Heart right ventricle (tissue), 16 donors: ENCODE measurements at regions of chr10 and their contacts with region 1.

Region 1: DNA sequence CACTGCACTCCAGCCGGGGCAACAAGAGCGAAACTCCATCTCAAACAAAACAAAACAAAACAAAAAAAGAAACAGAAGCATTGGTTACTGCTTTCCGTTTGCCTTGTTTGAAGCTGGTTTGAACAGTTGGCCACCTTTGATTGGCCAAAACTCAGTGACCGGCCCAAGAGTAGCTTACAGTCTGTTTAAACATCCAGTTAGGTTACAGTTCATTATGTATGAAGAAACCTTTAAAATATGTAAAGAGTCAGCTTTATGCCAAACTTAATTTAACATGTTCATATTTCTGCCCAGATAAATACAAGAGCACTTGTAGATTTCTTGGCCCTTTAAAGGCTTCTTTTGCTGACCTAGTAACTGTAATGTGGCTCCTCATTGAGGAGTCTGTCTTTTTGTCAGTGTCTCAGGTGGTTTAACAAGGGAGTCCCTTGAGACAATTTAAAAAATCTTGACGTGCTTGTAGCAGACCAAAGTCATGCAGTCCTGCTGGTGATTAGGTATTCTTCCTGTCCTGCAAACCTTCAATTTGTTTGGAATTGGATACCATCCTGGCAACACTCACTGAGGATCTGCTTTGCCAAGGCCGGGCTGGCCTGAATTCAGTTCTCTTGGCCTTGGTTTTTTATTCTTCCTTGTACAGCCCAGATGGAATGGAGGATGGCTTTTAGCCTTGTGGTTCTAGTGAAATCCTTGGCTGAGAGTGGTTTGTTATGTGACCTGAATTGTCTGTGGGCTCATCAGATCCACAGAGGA is 128.9 kb downstream of the PLXDC2 start:
- DNase-seq: peak; percentile 49 to 50
- ATAC-seq: peak; percentile 43 to 89 (median 66)
- H3K4me3 ChIP-seq: no peak overlapping the region
- H3K27ac ChIP-seq: peak overlapping the region in 9 of 10 donors; percentile 1 to 72 (median 47)
- H3K4me1 ChIP-seq: peaks cover 20 to 70% (median 45%) of the 10 kb centered on the region in 9 donors
- H3K27me3 ChIP-seq: no peaks in the 10 kb centered on the region
- CTCF ChIP-seq: no peak

Region 2: GRCh38 chr10:19828278-19829049 is 116.6 kb before region 1 on chr10:
- intact Hi-C with region 1: loop called in 2 of 10 experiments (anchors 5 to 10 kb)
- DNase-seq: peak in 1 of 2 donors; percentile 22
- ATAC-seq: peak; percentile 61 to 76 (median 68)
- H3K4me3 ChIP-seq: no peak overlapping the region
- H3K27ac ChIP-seq: peak overlapping the region in 8 of 10 donors; percentile 1 to 72 (median 48)
- H3K4me1 ChIP-seq: peaks cover 9 to 92% (median 80%) of the 10 kb centered on the region in 9 donors
- H3K27me3 ChIP-seq: no peaks in the 10 kb centered on the region
- CTCF ChIP-seq: no peak

Region 3: DNA sequence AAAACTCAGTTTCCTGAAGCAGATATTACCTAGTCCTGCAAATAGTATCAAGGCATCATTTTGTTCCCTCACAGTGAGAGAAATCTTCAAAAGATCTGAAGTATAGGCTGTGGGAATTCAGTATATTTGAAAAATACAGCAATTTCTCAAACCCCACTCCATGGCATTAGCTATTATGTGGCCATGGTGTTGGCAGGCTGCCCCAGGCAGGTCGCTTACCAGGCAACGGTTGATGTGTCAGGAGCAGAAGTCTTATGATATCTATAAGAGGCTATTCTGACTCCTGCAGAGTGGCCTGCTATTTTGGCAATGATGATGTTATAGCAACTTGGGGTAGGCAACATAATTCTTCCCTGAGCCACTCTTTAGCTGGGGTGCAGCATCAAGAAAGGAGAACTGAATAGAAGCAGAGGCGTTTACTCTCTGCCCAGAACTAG is 59.0 kb after region 1 on chr10:
- intact Hi-C with region 1: loop called in 1 of 10 experiments (anchors 5 kb)
- DNase-seq: peak; percentile 36 to 57
- ATAC-seq: peak; percentile 31 to 85 (median 56)
- H3K4me3 ChIP-seq: peak overlapping the region in 1 of 10 donors; percentile 12
- H3K27ac ChIP-seq: peak overlapping the region; percentile 59 to 93 (median 76)
- H3K4me1 ChIP-seq: peaks cover 4 to 75% (median 38%) of the 10 kb centered on the region in 9 donors
- H3K27me3 ChIP-seq: no peaks in the 10 kb centered on the region
- CTCF ChIP-seq: no peak

Region 4: GRCh38 chr10:20020677-20021076 is 75.6 kb after region 1 on chr10:
- intact Hi-C with region 1: no loop called
- DNase-seq: no peak
- ATAC-seq: no peak
- H3K4me3 ChIP-seq: no peak overlapping the region
- H3K27ac ChIP-seq: no peak overlapping the region
- H3K4me1 ChIP-seq: peaks cover 0 to 21% (median 7%) of the 10 kb centered on the region in 9 donors
- H3K27me3 ChIP-seq: no peaks in the 10 kb centered on the region
- CTCF ChIP-seq: no peak

Region 5: DNA sequence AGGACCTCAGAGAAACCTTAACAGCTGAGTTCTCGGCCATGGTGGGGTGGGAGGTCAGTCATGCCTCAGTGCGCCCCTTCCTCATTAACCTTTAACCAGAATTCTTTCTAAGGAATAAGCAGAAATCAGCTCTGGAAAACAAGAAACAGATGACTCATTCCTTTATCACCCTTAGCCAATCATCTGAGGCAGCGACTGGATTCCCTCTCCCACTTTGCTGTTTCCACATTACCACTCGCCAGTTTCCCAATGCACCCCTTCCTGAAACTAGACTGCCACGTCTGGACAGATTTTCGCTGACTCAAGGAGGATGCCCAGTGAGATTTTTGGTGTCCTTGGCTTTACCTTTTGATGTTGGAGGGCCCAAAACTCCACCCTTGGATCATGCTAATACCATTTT is 94.9 kb after region 1 on chr10:
- intact Hi-C with region 1: no loop called
- DNase-seq: no peak
- ATAC-seq: no peak
- H3K4me3 ChIP-seq: no peak overlapping the region
- H3K27ac ChIP-seq: no peak overlapping the region
- H3K4me1 ChIP-seq: peaks cover 0 to 9% (median 0%) of the 10 kb centered on the region in 9 donors
- H3K27me3 ChIP-seq: no peaks in the 10 kb centered on the region
- CTCF ChIP-seq: no peak

Region 6: GRCh38 chr10:20100171-20100570 is 155.1 kb after region 1 on chr10:
- intact Hi-C with region 1: no loop called
- DNase-seq: peak in 1 of 2 donors; percentile 11
- ATAC-seq: peak in 7 of 8 donors; percentile 69 to 93 (median 87)
- H3K4me3 ChIP-seq: peak overlapping the region in 2 of 10 donors; percentile 1 to 20
- H3K27ac ChIP-seq: peak overlapping the region in 9 of 10 donors; percentile 49 to 80 (median 66)
- H3K4me1 ChIP-seq: peaks cover 0 to 42% (median 23%) of the 10 kb centered on the region in 9 donors
- H3K27me3 ChIP-seq: no peaks in the 10 kb centered on the region
- CTCF ChIP-seq: no peak